GM12878 (cell line): ENCODE measurements at regions of chr16 and their contacts with region 1.

Region 1: DNA sequence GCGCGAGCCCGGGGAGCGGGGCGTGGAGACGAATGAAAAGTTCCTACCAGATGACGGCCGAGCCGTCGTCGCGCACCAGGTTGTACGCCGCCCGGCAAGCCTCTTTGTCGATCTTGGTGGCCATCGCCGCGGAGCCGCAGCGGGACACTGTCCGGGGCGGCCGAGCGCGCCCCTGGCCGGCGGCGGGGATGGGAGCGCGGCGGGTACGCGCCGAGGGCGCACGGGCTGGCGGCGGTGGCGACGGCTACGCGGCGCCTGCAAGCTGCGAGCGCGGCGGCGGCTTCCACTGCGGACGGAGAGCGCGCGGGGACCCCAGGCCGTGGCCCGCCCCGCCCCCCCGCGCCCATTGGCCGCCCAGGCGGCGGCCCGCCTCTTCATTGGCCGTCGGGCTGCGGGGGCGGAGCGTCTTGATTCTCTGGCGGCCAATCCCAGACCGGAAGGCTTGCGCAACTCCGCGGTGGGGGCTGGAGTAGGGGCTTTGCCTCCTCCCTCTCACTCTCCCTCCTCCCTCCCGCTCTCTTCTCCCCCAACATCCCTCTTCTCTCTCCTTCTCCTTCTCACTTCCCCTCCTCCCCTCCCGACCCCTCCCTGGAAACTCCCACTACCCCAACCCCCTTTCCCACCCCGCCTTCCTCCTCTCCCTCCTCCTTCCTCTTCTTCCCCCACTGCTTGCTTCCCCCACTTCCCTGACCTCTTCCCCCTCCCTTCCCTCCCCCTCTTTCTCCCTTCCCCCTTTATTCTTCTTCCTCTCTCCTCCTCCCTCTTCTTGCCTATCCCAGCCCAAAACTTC is at the start of gene COTL1:
- DNase-seq: no peak
- ATAC-seq: peak; percentile 76
- H3K4me3 ChIP-seq: peak within 1 kb of the TSS; percentile 99
- H3K27ac ChIP-seq: peak within 1 kb of the TSS; percentile 78
- H3K4me1 ChIP-seq: peaks cover 42% of the 10 kb centered on the region
- H3K27me3 ChIP-seq: no peaks in the 10 kb centered on the region
- CTCF ChIP-seq: no peak
- EP300 ChIP-seq: no peak
- POLR2A ChIP-seq: peak; percentile 85
- RAD21 ChIP-seq: no peak
- polyA plus RNA-seq, gene COTL1: 140 to 235 TPM

Region 2: GRCh38 chr16:84277237-84277823 is 340.7 kb before region 1 on chr16:
- CTCF ChIA-PET with region 1: interaction called, 16 read pairs
- POLR2A ChIA-PET with region 1: no interaction called
- RAD21 ChIA-PET with region 1: interaction called, 3 read pairs
- SMC1A ChIA-PET with region 1: interaction called, 3 read pairs
- in situ Hi-C with region 1: loop called (anchors 10 kb)
- intact Hi-C with region 1: loop called (anchors 2 kb)
- DNase-seq: no peak
- ATAC-seq: peak; percentile 92
- H3K4me3 ChIP-seq: no peak overlapping the region
- H3K27ac ChIP-seq: no peak overlapping the region
- H3K4me1 ChIP-seq: no peaks in the 10 kb centered on the region
- H3K27me3 ChIP-seq: peaks cover 0 to 2% of the 10 kb centered on the region in 2 experiments; a peak in 2 of 4 replicates
- CTCF ChIP-seq: peak; percentile 69 to 82 (median 72)
- EP300 ChIP-seq: no peak
- POLR2A ChIP-seq: no peak
- RAD21 ChIP-seq: peak; percentile 69

Region 3: GRCh38 chr16:84518748-84519341 is 99.1 kb before region 1 on chr16:
- CTCF ChIA-PET with region 1: interaction called, 299 read pairs
- POLR2A ChIA-PET with region 1: interaction called, 8 read pairs
- RAD21 ChIA-PET with region 1: interaction called, 194 read pairs
- SMC1A ChIA-PET with region 1: interaction called, 119 read pairs
- in situ Hi-C with region 1: loop called (anchors 5 kb)
- intact Hi-C with region 1: loop called (anchors 2 kb)
- DNase-seq: no peak
- ATAC-seq: no peak
- H3K4me3 ChIP-seq: no peak overlapping the region
- H3K27ac ChIP-seq: no peak overlapping the region
- H3K4me1 ChIP-seq: peaks cover 34% of the 10 kb centered on the region
- H3K27me3 ChIP-seq: no peaks in the 10 kb centered on the region
- CTCF ChIP-seq: no peak
- EP300 ChIP-seq: no peak
- POLR2A ChIP-seq: no peak
- RAD21 ChIP-seq: no peak

Region 4: DNA sequence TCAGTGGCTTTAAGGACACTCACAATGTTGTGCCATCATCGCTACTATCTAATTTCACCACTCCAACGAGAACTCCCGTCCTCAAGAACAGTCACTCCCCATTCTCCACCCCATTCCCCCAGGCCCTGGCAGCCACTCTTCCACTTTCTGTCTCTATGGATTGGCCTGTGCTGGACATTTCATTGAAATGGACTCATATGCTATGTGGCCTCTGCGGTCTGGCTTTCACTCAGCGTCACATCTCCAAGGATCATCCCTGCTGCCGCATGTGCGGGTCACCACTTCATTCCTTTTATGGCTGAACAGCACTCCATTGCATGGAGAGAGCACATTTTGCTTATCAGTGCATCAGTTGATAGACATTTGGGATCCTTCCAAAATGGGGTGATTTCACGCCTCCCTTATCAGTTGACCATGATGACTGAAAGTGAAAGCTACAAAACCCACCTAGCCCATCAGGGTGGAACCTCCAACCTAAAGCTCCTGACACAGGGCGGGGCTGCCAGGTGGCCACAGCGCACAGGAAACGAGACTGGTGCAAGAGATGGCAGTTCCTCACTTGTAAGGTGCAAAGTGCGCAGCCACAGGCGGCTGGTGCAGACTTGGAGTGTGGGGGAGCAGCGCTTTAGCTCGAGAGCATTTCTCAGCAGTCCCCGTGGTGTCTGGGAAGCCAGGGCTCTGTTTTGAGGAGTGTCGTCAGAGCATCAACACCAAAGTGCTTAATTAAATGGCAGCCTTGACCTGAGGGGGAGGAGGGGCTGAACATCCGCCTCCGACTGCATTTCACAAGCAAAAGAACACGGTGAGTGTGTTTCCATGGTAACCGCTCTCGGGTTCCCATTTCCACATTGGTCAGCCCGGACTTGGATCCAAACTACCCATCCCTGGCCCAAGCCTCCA is 23.9 kb before region 1 on chr16:
- CTCF ChIA-PET with region 1: interaction called, 33 read pairs
- POLR2A ChIA-PET with region 1: interaction called, 214 read pairs
- RAD21 ChIA-PET with region 1: interaction called, 224 read pairs
- SMC1A ChIA-PET with region 1: interaction called, 229 read pairs
- in situ Hi-C with region 1: no loop called
- intact Hi-C with region 1: loop called (anchors 1 kb)
- DNase-seq: peak; percentile 99
- ATAC-seq: peak; percentile 87
- H3K4me3 ChIP-seq: peak overlapping the region; percentile 77
- H3K27ac ChIP-seq: peak overlapping the region; percentile 97
- H3K4me1 ChIP-seq: peaks cover 57% of the 10 kb centered on the region
- H3K27me3 ChIP-seq: no peaks in the 10 kb centered on the region
- CTCF ChIP-seq: no peak
- EP300 ChIP-seq: peak; percentile 96 to 99
- POLR2A ChIP-seq: peak; percentile 85
- RAD21 ChIP-seq: peak; percentile 20; the same call in 1 of the 2 replicates

Region 5: DNA sequence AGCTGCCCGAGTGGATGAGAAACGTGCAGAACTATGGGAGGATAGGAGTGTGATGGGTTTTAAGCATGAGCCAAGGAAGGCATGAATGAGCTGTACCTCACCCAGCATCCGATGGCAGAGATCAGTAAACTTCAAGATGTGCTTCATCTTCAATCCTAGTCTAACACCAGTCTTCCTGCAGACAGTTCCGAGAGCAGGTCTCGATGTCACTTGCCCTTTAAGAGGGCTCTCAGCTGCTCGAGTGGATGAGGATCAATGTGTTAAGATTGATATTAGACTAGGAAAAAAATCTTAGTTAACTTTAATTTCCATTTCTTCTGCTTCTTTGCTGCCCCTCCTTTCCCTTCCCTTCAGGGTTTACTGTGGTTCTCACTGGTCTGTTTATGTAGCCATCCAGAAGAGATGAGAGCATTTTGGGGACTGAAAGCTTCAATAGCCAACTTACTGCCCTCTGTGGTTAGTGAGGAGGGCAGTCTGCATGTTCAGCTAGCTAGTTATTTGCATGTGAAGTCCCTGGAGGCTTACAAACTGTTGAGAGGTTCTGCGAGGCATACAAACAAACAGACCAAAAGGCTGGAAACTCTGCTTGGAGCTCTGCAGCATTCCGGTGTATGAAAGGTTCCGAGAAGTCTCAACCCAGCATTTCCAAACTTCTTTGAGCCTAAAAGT is 45.6 kb after region 1 on chr16:
- CTCF ChIA-PET with region 1: interaction called, 34 read pairs
- POLR2A ChIA-PET with region 1: no interaction called
- RAD21 ChIA-PET with region 1: interaction called, 6 read pairs
- SMC1A ChIA-PET with region 1: interaction called, 24 read pairs
- in situ Hi-C with region 1: no loop called
- intact Hi-C with region 1: loop called (anchors 2 kb)
- DNase-seq: peak; percentile 76
- ATAC-seq: peak; percentile 96
- H3K4me3 ChIP-seq: no peak overlapping the region
- H3K27ac ChIP-seq: 0 out of 2 replicates have a peak overlapping the region, but pooled peaks have one; percentile 38
- H3K4me1 ChIP-seq: peaks cover 22% of the 10 kb centered on the region
- H3K27me3 ChIP-seq: no peaks in the 10 kb centered on the region
- CTCF ChIP-seq: no peak
- EP300 ChIP-seq: no peak
- POLR2A ChIP-seq: 0 out of 2 replicates have a peak, but pooled peaks have one; percentile 18
- RAD21 ChIP-seq: no peak

Region 6: DNA sequence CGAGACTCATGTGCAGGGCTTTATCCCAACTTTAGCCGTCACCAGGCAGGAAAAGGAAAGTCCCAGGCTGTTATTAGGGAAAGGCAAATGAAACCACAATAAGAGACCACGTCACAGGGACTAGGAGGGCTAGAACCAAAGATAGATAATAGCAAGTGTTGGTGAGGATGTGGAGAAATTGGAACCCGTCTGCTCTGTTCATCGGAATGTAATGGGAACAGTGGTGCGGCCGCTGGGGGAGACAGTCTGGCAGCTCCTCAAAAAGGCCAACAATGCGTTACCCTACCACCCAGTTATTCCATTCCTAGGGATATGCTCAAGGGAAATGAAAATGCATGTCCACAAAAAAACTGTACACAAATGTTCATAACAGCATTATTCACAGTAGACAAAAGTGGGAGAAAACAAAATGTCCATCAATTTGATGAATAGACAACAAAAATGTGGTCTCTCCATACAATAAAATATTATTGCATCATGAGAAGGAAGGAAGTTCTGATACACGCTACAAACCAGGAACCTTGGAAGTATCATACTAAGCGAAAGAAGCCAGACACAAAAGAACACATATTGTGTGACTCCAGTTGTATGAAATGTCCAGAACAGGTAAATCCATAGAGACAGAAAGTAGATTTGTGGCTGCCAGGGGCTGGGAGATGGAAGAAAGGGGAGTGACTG is 62.3 kb after region 1 on chr16:
- CTCF ChIA-PET with region 1: no interaction called
- POLR2A ChIA-PET with region 1: no interaction called
- RAD21 ChIA-PET with region 1: no interaction called
- SMC1A ChIA-PET with region 1: no interaction called
- in situ Hi-C with region 1: no loop called
- intact Hi-C with region 1: no loop called
- DNase-seq: no peak
- ATAC-seq: no peak
- H3K4me3 ChIP-seq: no peak overlapping the region
- H3K27ac ChIP-seq: no peak overlapping the region
- H3K4me1 ChIP-seq: no peaks in the 10 kb centered on the region
- H3K27me3 ChIP-seq: no peaks in the 10 kb centered on the region; a peak in 1 of 4 replicates
- CTCF ChIP-seq: no peak
- EP300 ChIP-seq: no peak
- POLR2A ChIP-seq: no peak
- RAD21 ChIP-seq: no peak

Region 7: DNA sequence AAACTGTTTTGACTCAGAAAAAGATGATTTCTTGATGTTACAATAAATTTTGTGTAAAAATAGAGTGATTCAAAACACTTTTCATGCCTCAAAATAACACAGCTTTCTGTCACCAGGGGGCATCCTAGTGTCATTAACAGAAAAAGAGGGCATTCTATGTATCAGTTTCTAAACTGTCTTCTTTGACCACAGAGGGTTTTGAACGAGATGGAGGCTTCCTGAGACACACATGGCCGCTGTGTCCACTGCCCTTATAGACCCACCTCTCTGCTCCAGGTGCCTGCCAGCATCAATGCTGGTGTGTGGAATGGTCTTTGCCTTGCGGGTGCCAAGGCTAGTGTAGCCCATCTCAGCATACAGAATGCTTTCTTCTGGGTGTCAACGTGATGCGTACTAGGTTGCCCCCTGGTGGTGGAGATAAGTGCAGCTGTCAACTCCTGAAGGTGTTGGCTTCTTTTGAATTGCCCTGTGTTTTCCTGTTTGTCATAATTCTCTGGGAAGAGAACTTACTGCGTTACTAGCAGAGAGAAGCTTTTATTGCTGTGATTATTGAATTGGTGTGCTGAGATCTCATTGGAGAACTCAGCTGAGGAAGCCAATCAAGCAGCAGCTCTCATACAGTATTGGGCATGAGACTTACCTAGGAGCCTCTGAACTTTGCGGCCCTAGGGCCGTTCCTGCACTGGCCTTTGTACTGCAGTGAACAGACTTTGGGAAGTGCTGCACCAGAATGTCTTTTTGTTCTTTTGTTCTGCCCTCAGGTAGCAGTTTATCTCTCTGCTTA is 120.5 kb after region 1 on chr16:
- CTCF ChIA-PET with region 1: interaction called, 112 read pairs
- POLR2A ChIA-PET with region 1: no interaction called
- RAD21 ChIA-PET with region 1: interaction called, 37 read pairs
- SMC1A ChIA-PET with region 1: interaction called, 62 read pairs
- in situ Hi-C with region 1: no loop called
- intact Hi-C with region 1: loop called (anchors 1 kb)
- DNase-seq: peak; percentile 71
- ATAC-seq: peak; percentile 95
- H3K4me3 ChIP-seq: no peak overlapping the region
- H3K27ac ChIP-seq: no peak overlapping the region
- H3K4me1 ChIP-seq: peaks cover 14% of the 10 kb centered on the region
- H3K27me3 ChIP-seq: no peaks in the 10 kb centered on the region
- CTCF ChIP-seq: peak; percentile 82 to 96 (median 83)
- EP300 ChIP-seq: no peak
- POLR2A ChIP-seq: no peak
- RAD21 ChIP-seq: peak; percentile 62

Region 8: GRCh38 chr16:84970447-84971127 is 352.6 kb after region 1 on chr16:
- CTCF ChIA-PET with region 1: interaction called, 22 read pairs
- POLR2A ChIA-PET with region 1: no interaction called
- RAD21 ChIA-PET with region 1: interaction called, 7 read pairs
- SMC1A ChIA-PET with region 1: interaction called, 14 read pairs
- in situ Hi-C with region 1: no loop called
- intact Hi-C with region 1: loop called (anchors 5 kb)
- DNase-seq: peak; percentile 27
- ATAC-seq: peak; percentile 99
- H3K4me3 ChIP-seq: no peak overlapping the region
- H3K27ac ChIP-seq: no peak overlapping the region
- H3K4me1 ChIP-seq: no peaks in the 10 kb centered on the region
- H3K27me3 ChIP-seq: no peaks in the 10 kb centered on the region
- CTCF ChIP-seq: peak; percentile 89 to 92 (median 90)
- EP300 ChIP-seq: no peak
- POLR2A ChIP-seq: no peak
- RAD21 ChIP-seq: peak; percentile 82